Activated naive CD4-positive, alpha-beta T cell treated with anti-CD3 and anti-CD28 coated beads for 36 hours (primary cell): ENCODE measurements at regions of chr3 and their contacts with region 1.

Region 1: DNA sequence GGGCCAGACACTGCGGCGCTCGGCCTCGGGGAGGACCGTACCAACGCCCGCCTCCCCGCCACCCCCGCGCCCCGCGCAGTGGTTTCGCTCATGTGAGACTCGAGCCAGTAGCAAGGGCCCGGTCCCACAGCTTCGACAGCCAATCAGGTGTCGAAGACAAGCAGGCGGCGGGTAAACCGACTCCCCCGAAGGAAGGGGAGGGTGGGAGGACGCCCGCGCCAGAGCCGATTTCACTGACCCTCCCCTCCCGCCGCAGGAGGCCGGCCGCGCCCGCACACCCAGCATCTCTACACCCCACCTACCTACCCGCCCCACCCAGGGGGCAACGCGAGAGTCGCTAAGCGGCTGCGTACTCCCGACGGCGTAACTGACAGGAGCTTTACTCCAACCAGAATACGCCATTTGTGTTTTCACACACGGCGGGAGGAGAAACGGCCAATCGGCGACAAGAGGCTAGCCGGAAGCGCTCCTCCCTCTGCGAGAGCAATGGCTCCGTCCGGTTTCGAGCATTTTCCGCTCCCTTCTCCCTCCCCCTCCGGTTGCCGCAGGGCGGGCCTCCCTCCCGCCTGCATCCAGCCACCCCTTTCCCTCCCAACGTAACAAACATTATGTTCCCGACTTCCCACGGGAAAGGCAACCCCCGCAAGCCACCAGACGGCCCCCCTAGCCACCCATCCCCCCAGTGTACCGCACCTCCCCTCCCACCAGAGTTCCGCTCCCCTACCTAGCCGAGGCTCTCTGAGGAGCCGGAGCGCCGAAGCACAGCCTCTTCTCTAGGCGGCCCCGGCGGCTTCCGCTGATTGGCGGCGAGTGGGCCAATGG is 504 bp upstream of the SETD5 start:
- DNase-seq: peak; percentile 98
- H3K4me3 Mint-ChIP-seq: peak overlapping the region; percentile 91
- H3K27ac Mint-ChIP-seq: peak overlapping the region; percentile 96
- H3K4me1 Mint-ChIP-seq: peaks cover 65% of the 10 kb centered on the region
- H3K27me3 Mint-ChIP-seq: no peaks in the 10 kb centered on the region

Region 2: GRCh38 chr3:9168241-9168741 is 228.6 kb before region 1 on chr3:
- CTCF ChIA-PET with region 1: no interaction called
- intact Hi-C with region 1: loop called (anchors 5 kb)
- DNase-seq: peak; percentile 85
- H3K4me3 Mint-ChIP-seq: no peak overlapping the region
- H3K27ac Mint-ChIP-seq: peak overlapping the region; percentile 17
- H3K4me1 Mint-ChIP-seq: peaks cover 4% of the 10 kb centered on the region
- H3K27me3 Mint-ChIP-seq: no peaks in the 10 kb centered on the region

Region 3: DNA sequence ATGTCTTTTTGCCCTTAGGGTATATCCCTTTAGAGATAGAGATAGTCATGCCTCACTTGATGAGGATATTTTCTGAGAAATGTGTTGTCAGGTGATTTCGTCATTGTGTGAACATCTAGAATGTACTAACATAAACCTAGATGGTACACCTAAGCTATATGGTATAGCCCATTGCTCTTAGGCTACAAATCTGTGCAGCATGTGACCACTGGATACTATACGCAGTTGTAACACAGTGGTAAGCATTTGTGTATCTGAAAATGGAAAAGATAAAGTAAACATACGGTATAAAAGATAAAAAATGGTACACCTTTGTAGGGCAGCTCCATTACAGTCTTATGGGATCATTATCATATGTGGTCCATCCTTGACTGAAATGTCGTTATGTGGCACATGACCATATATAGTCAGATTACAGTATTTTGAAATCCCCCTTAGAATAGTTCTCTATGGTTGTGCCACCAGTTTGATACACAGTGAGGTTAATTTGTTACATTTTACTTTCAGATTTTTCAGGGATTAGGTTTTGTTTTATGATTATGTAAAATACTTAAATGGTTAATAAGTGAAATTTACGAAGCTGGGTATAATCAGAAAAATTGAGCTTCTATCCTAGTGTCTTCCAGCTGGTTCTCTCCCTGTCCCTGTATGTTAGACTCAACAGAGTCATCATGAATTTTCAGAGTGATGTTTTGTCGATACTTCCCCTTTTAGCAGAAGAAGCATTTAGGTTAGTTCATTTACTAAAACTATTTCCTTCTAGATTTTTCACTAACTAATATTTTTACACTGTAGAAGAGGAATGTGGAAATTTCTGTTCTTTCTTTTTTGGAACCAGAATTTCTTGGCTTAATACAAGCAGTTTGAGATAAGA is 13.3 kb after region 1 on chr3:
- CTCF ChIA-PET with region 1: no interaction called
- intact Hi-C with region 1: loop called (anchors 1 kb)
- DNase-seq: no peak
- H3K4me3 Mint-ChIP-seq: no peak overlapping the region
- H3K27ac Mint-ChIP-seq: peak overlapping the region; percentile 28
- H3K4me1 Mint-ChIP-seq: peaks cover 57% of the 10 kb centered on the region
- H3K27me3 Mint-ChIP-seq: no peaks in the 10 kb centered on the region

Region 4: GRCh38 chr3:9649791-9650521 is 253.0 kb after region 1 on chr3:
- CTCF ChIA-PET with region 1: no interaction called
- intact Hi-C with region 1: loop called (anchors 1 kb)
- DNase-seq: no peak
- H3K4me3 Mint-ChIP-seq: peak overlapping the region; percentile 94
- H3K27ac Mint-ChIP-seq: peak overlapping the region; percentile 86
- H3K4me1 Mint-ChIP-seq: peaks cover 32% of the 10 kb centered on the region
- H3K27me3 Mint-ChIP-seq: no peaks in the 10 kb centered on the region

Region 5: DNA sequence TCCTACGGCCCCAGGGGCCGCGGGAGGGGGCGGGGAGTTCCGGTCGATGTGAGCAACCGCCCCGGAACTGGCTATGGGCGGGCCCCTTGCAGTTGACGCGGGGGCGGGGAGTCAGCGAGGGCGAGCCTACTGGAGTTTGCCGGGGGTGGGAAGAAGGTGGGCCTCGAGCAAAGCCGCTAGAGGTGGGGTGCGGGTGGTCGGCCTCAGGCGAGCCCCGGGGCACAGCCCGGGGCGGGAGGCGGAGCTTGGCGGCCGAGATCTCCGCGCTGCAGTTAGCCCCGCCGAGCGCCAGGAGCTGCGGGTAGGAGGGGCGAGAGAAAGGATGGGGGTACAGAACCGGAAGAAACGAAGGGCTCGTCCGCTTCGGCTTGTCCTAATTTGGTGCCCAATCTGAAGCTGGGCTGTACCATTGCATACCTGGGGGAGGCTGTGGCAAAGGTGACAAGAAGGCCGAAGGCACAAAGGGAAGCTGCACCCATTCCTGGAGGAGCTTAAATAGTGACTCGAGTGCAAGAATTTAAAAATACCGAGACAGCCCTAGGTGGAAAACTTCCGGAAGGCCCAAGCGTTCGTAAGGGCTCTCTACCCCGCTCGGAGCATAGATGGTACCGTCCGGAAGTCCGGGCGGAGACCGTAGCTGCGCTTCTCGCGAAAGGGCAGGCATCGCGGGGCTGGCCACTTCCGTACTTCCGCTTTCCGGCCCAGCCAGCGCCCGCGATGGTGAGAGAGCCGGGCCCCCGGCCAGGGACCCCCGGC is 395.7 kb after region 1 on chr3 and contains the starts of genes ARPC4 and TADA3:
- CTCF ChIA-PET with region 1: no interaction called
- intact Hi-C with region 1: loop called (anchors 1 kb)
- DNase-seq: peak; percentile 94
- H3K4me3 Mint-ChIP-seq: peak within 1 kb of the TSS; percentile 94
- H3K27ac Mint-ChIP-seq: peak within 1 kb of the TSS; percentile 100
- H3K4me1 Mint-ChIP-seq: peaks cover 67% of the 10 kb centered on the region
- H3K27me3 Mint-ChIP-seq: no peaks in the 10 kb centered on the region
- total RNA-seq, gene ARPC4: 141 to 144 TPM
- total RNA-seq, gene TADA3: 62.4 to 67.6 TPM

Region 6: GRCh38 chr3:10026084-10026890 is 629.4 kb after region 1 on chr3 and contains the start of gene FANCD2:
- CTCF ChIA-PET with region 1: no interaction called
- intact Hi-C with region 1: loop called (anchors 1 kb)
- DNase-seq: peak; percentile 94
- H3K4me3 Mint-ChIP-seq: peak within 1 kb of the TSS; percentile 92
- H3K27ac Mint-ChIP-seq: peak within 1 kb of the TSS; percentile 98
- H3K4me1 Mint-ChIP-seq: peaks cover 22% of the 10 kb centered on the region
- H3K27me3 Mint-ChIP-seq: no peaks in the 10 kb centered on the region
- total RNA-seq, gene FANCD2: 86.3 to 90.8 TPM

Region 7: GRCh38 chr3:10248184-10249080 is 851.5 kb after region 1 on chr3 and contains the start of gene TATDN2:
- CTCF ChIA-PET with region 1: no interaction called
- intact Hi-C with region 1: loop called (anchors 2 kb)
- DNase-seq: peak; percentile 98
- H3K4me3 Mint-ChIP-seq: peak within 1 kb of the TSS; percentile 89
- H3K27ac Mint-ChIP-seq: peak within 1 kb of the TSS; percentile 92
- H3K4me1 Mint-ChIP-seq: peaks cover 55% of the 10 kb centered on the region
- H3K27me3 Mint-ChIP-seq: no peaks in the 10 kb centered on the region
- total RNA-seq, gene TATDN2: 25.8 to 28.1 TPM